Heart right ventricle (tissue), 16 donors: ENCODE measurements at regions of chr15 and their contacts with region 1.

Region 1: DNA sequence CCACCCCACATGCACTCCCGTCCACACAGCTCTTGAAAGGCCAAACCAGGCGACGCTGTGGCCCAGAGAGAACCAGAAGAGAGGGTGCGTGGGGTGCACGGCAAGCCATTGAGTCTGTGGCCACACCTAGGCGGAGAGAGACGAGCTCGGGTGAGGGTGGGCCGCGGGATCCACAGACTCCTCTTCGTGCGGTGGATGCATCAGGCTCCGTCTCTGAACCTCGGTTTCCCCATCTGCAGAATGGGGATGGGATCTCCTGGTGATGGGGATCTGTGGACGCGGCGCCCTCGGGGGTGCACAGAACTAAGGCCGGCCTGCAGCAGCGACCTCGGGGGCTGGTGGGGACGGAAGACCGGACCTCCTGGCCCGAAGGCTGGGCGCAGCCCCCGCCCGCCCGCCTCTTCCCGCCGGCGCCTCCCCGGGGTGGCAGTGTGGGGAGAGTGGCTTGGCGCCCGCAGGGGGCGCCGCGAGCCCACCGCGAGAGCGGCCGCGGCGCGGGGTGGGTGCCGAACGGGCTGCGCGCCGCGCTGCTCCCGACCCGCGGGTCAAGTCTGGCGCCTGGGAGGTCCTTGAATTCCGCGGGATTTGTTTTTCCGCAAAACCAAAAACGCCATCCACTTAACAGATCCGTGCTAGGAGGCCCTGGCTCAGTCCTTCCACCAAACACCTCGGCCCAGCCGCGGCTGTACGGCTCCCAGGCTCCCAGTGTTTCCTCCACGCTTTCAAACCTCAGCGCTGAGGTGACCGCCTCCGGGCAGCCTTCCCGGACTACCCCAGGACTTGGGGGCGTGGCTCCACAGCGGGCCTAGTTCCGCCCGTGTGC is 13.2 kb upstream of the ADPGK start:
- DNase-seq: peak; percentile 26 to 54
- ATAC-seq: peak; percentile 79 to 94 (median 90)
- H3K4me3 ChIP-seq: peak overlapping the region; percentile 32 to 63 (median 54)
- H3K27ac ChIP-seq: peak overlapping the region in 1 of 10 donors; percentile 9
- H3K4me1 ChIP-seq: peaks cover 0 to 17% (median 8%) of the 10 kb centered on the region in 9 donors
- H3K27me3 ChIP-seq: peaks cover 0 to 71% (median 55%) of the 10 kb centered on the region in 7 donors
- CTCF ChIP-seq: peak; percentile 40 to 77 (median 57)

Region 2: DNA sequence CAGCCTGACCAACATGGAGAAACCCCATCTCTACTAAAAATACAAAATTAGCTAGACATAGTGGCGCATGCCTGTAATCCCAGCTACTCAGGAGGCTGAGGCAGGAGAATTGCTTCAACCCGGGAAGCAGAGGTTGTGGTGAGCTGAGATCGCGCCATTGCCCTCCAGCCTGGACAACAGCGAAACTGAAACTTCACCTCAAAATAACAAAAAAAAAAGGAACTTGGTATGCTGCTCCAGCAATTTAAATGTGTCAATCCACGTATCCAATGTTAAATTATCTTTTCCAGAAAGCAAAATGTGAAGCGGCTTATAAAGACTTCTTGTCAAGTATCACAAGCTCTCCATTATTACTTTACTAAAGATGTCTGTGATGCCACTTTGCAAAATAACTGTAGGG is 332.5 kb before region 1 on chr15:
- intact Hi-C with region 1: no loop called
- DNase-seq: no peak
- ATAC-seq: no peak
- H3K4me3 ChIP-seq: peak overlapping the region in 1 of 10 donors; percentile 26
- H3K27ac ChIP-seq: peak overlapping the region in 1 of 10 donors; percentile 61
- H3K4me1 ChIP-seq: peaks cover 0 to 21% (median 0%) of the 10 kb centered on the region in 9 donors
- H3K27me3 ChIP-seq: no peaks in the 10 kb centered on the region
- CTCF ChIP-seq: no peak

Region 3: DNA sequence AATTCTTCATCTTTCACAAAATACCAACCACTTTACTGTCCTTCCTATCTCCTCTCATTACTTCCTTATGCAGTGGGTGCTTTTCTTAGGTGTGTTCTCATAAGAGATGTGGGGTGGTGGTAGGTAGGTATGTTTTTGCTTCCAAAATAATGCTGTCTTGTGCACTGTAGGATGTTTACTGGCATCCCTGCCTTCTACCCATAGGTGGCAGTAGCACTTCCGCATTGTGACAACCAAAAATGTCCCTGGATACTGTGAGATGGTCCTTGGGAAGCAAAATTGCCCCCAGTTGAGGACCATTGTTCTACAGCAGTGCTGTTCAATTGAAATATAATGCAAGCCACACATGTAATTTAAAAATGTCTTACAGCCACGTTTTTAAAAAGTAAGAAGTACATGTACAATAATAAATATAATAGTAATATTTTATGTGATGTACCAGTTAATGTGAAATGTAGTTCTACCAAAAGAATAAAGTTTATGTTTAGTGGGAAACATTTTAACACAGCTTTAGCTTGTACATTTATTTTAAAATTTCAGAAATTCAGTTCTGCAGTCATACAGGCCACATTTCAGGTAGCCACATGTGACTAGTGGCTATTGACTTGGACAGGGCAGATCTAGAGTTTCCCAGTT is 330.7 kb after region 1 on chr15:
- intact Hi-C with region 1: loop called in 1 of 10 experiments (anchors 5 kb)
- DNase-seq: peak in 1 of 2 donors; percentile 5
- ATAC-seq: no peak
- H3K4me3 ChIP-seq: no peak overlapping the region
- H3K27ac ChIP-seq: no peak overlapping the region
- H3K4me1 ChIP-seq: no peaks in the 10 kb centered on the region
- H3K27me3 ChIP-seq: no peaks in the 10 kb centered on the region
- CTCF ChIP-seq: peak in 8 of 9 donors; percentile 21 to 80 (median 61)